CD4-positive, alpha-beta memory T cell (primary cell): ENCODE measurements at regions of chr3 and their contacts with region 1.

Region 1: DNA sequence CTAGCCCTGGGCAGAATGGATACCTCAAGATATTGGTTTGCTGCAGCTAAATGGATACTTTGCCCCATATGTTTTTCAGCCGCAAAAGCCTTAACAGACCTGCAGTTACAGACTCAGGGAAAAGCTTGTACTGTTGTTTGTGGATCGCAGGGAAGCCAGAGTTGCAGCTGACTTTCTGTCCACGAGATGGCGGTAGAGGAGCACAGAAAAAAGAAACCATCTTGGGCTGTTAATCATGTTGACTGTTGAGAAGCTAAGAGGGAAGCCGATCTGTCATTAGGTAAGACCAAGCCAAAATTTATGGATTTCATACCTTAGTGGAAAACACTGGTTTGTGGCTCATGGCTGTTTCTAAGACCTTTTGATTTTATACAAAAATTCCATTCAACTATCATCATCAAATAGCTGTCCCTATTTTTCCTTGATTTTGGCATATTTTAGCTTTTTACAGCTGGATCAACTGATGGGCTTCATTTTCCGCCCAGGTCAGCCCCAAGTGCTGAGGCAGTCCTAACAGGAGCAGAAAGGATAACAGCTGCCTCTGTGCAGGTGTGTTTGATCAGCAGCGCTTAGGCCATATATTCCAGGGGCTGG is 205.7 kb upstream of the ZPLD1 start:
- DNase-seq: peak; percentile 65 to 77 (median 73)
- H3K4me3 ChIP-seq: no peak overlapping the region
- H3K4me3 Mint-ChIP-seq: peak overlapping the region in 1 of 8 donors; percentile 7
- H3K27ac ChIP-seq: no peak overlapping the region
- H3K27ac Mint-ChIP-seq: no peak overlapping the region
- H3K4me1 ChIP-seq: no peaks in the 10 kb centered on the region
- H3K4me1 Mint-ChIP-seq: peaks cover 3 to 12% (median 8%) of the 10 kb centered on the region in 4 donors
- H3K27me3 ChIP-seq: no peaks in the 10 kb centered on the region
- H3K27me3 Mint-ChIP-seq: peaks cover 0 to 2% of the 10 kb centered on the region in 2 donors

Region 2: GRCh38 chr3:101803173-101803782 is 425.9 kb before region 1 on chr3:
- CTCF ChIA-PET with region 1: interaction called, 573 read pairs
- POLR2A ChIA-PET with region 1: interaction called, 10 read pairs
- intact Hi-C with region 1: no loop called
- DNase-seq: peak; percentile 64 to 77 (median 71)
- H3K4me3 ChIP-seq: no peak overlapping the region
- H3K4me3 Mint-ChIP-seq: peak overlapping the region in 4 of 8 donors; percentile 8 to 66 (median 32)
- H3K27ac ChIP-seq: peak overlapping the region; percentile 18
- H3K27ac Mint-ChIP-seq: peak overlapping the region; percentile 56 to 85 (median 66)
- H3K4me1 ChIP-seq: peaks cover 13% of the 10 kb centered on the region
- H3K4me1 Mint-ChIP-seq: peaks cover 14 to 36% (median 20%) of the 10 kb centered on the region in 4 donors
- H3K27me3 ChIP-seq: no peaks in the 10 kb centered on the region
- H3K27me3 Mint-ChIP-seq: no peaks in the 10 kb centered on the region

Region 3: DNA sequence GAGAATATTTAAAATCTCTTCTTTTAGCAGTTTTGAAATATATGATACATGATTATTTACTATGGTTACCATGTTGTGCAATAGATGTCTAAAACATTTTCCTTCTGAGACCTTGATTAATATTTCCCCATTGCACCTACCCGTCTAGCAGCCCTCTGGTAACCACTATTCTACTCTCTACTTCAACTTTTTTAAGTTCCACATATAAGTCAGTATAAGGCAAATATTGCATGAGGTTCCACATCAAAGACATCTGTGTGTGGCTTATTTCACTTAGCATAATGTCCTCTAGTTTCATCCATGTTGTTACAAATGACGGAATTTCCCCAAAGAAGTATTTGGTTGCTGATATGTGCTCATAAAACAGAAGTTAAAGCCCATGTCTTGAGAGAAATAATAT is 409.4 kb before region 1 on chr3:
- CTCF ChIA-PET with region 1: interaction called, 573 read pairs
- POLR2A ChIA-PET with region 1: interaction called, 6 read pairs
- intact Hi-C with region 1: no loop called
- DNase-seq: no peak
- H3K4me3 ChIP-seq: no peak overlapping the region
- H3K4me3 Mint-ChIP-seq: no peak overlapping the region
- H3K27ac ChIP-seq: no peak overlapping the region
- H3K27ac Mint-ChIP-seq: peak overlapping the region in 2 of 7 donors; percentile 41 to 74
- H3K4me1 ChIP-seq: peaks cover 2% of the 10 kb centered on the region
- H3K4me1 Mint-ChIP-seq: peaks cover 7 to 16% (median 12%) of the 10 kb centered on the region in 4 donors
- H3K27me3 ChIP-seq: no peaks in the 10 kb centered on the region
- H3K27me3 Mint-ChIP-seq: no peaks in the 10 kb centered on the region

Region 4: DNA sequence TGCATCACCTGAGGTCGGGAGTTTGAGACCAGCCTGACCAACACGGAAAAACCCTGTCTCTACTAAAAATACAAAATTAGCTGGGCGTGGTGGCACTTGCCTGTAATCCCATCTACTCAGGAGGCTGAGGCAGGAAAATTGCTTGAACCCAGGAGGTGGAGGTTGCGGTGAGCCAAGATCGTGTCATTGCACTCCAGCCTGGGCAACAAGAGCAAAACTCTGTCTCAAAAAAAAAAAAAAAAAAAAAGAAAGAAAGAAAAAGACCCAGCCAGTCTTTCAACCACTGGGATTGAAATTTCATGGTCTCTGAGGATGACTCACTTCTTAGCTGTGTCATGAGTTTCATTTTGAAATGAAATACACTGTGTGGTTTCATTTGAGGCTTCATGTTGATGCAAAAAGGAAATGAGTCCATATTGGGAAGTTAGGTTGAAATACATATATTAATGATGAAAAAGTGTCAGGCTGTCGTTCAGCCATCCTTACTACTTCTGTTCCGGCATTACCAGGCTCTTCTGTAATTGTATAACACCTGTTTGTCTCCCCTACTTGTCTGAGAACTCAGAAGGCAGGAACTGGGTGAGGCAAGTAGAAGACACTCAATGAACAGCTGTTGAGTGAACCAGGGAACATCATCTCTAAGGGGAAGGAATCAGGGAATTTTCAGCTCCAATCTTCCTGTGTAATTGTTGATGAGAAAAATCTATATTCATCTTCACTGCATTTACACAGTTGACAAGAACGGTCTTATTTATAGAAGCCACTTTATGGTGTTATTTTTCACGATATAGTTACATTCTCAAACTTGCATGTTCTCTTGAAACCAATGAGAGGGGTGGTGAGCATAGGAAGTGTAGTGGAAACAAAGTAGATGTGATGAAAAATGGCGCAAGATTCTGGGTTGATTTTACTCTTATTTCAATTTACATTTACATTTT is 292.5 kb before region 1 on chr3:
- CTCF ChIA-PET with region 1: interaction called, 7 read pairs
- POLR2A ChIA-PET with region 1: no interaction called
- intact Hi-C with region 1: loop called (anchors 5 kb)
- DNase-seq: peak; percentile 52 to 71 (median 65)
- H3K4me3 ChIP-seq: no peak overlapping the region
- H3K4me3 Mint-ChIP-seq: peak overlapping the region; percentile 61 to 87 (median 71)
- H3K27ac ChIP-seq: no peak overlapping the region
- H3K27ac Mint-ChIP-seq: peak overlapping the region; percentile 75 to 92 (median 86)
- H3K4me1 ChIP-seq: peaks cover 63% of the 10 kb centered on the region
- H3K4me1 Mint-ChIP-seq: peaks cover 18 to 26% (median 22%) of the 10 kb centered on the region in 4 donors
- H3K27me3 ChIP-seq: no peaks in the 10 kb centered on the region
- H3K27me3 Mint-ChIP-seq: no peaks in the 10 kb centered on the region

Region 5: DNA sequence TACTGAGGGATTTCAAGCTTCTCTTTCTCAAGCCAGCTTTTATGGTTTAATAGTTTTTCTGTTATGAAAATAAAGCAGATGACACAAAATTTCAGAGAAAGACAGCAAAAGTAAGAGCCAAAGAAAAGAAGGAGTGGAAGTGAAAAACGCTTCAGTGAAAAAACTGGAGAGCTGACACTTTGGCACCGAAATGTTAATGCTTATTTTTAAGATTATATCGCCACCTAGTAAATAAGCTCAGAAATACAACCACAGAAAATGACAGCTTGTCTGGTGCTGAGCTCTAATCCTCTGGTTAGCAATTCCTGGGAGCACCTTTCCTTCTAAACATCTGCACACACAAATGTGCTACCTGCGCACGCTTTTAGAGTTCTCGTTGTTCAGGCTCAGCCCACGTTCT is 307.3 kb after region 1 on chr3:
- CTCF ChIA-PET with region 1: interaction called, 108 read pairs
- POLR2A ChIA-PET with region 1: no interaction called
- intact Hi-C with region 1: loop called (anchors 1 kb)
- DNase-seq: peak in 4 of 5 donors; percentile 15 to 22 (median 18)
- H3K4me3 ChIP-seq: no peak overlapping the region
- H3K4me3 Mint-ChIP-seq: no peak overlapping the region
- H3K27ac ChIP-seq: no peak overlapping the region
- H3K27ac Mint-ChIP-seq: no peak overlapping the region
- H3K4me1 ChIP-seq: peaks cover 6% of the 10 kb centered on the region
- H3K4me1 Mint-ChIP-seq: peaks cover 0 to 8% (median 7%) of the 10 kb centered on the region in 4 donors
- H3K27me3 ChIP-seq: no peaks in the 10 kb centered on the region
- H3K27me3 Mint-ChIP-seq: peaks cover 3 to 6% of the 10 kb centered on the region in 2 donors

Region 6: GRCh38 chr3:102673271-102674115 is 444.3 kb after region 1 on chr3:
- CTCF ChIA-PET with region 1: interaction called, 26 read pairs
- POLR2A ChIA-PET with region 1: no interaction called
- intact Hi-C with region 1: loop called (anchors 10 kb)
- DNase-seq: peak; percentile 26 to 38 (median 32)
- H3K4me3 ChIP-seq: no peak overlapping the region
- H3K4me3 Mint-ChIP-seq: peak overlapping the region in 2 of 8 donors; percentile 11 to 67
- H3K27ac ChIP-seq: no peak overlapping the region
- H3K27ac Mint-ChIP-seq: no peak overlapping the region
- H3K4me1 ChIP-seq: no peaks in the 10 kb centered on the region
- H3K4me1 Mint-ChIP-seq: no peaks in the 10 kb centered on the region
- H3K27me3 ChIP-seq: peaks cover 5% of the 10 kb centered on the region
- H3K27me3 Mint-ChIP-seq: peaks cover 9 to 11% of the 10 kb centered on the region in 2 donors

Region 7: GRCh38 chr3:102979682-102980369 is 750.7 kb after region 1 on chr3:
- CTCF ChIA-PET with region 1: no interaction called
- POLR2A ChIA-PET with region 1: no interaction called
- intact Hi-C with region 1: no loop called
- DNase-seq: no peak
- H3K4me3 ChIP-seq: no peak overlapping the region
- H3K4me3 Mint-ChIP-seq: peak overlapping the region in 1 of 8 donors; percentile 20
- H3K27ac ChIP-seq: no peak overlapping the region
- H3K27ac Mint-ChIP-seq: no peak overlapping the region
- H3K4me1 ChIP-seq: no peaks in the 10 kb centered on the region
- H3K4me1 Mint-ChIP-seq: no peaks in the 10 kb centered on the region
- H3K27me3 ChIP-seq: no peaks in the 10 kb centered on the region
- H3K27me3 Mint-ChIP-seq: no peaks in the 10 kb centered on the region